ENCODE measurements at regions of chr4 and their contacts with region 1.

Region 1: GRCh38 chr4:154618708-154619315 is 6.4 kb upstream of the FGG start:
- ATAC-seq: peak in 4 of 8 experiments; percentile 61 to 76 (median 62)
- H3K4me3 ChIP-seq: no peak overlapping the region
- H3K27ac ChIP-seq: no peak overlapping the region
- H3K4me1 ChIP-seq: no peaks in the 10 kb centered on the region

Region 2: DNA sequence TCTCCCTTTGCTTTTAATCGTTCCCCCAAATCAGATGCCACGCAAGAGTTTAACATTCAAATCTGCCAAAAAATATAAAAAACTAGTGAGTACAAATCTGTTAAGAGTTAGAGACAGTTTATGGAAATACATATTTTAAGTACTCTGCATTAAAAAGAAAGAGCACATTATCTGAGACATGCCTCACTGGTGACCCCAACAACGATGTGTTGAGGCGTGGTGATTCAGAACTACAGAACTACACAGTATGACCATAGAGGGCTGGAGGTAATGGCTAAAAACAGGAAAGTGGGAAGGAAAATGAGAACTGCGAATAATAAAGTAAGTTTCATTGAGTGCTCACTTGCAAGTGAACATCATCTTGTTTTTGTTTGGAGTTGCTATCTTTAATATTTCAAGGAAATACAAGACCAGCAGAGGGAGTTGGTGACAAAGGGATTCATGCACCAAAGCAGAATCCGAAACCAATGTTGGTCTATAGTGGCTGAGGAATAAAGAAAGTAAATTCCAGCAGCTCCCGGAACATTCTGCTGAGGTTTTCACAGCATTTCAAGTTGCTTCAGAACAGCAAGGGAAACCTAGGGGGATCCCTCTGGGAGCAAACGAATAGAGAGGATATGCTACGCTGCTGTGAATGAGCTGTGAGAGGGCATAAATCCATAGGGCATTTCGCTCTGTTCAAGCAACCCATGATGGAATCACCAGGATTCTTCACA is 219.4 kb before region 1 on chr4:
- in situ Hi-C with region 1: loop called in 1 of 9 experiments (anchors 25 kb)
- ATAC-seq: peak in 5 of 8 experiments; percentile 36 to 91 (median 84)
- H3K4me3 ChIP-seq: no peak overlapping the region
- H3K27ac ChIP-seq: no peak overlapping the region
- H3K4me1 ChIP-seq: no peaks in the 10 kb centered on the region

Region 3: DNA sequence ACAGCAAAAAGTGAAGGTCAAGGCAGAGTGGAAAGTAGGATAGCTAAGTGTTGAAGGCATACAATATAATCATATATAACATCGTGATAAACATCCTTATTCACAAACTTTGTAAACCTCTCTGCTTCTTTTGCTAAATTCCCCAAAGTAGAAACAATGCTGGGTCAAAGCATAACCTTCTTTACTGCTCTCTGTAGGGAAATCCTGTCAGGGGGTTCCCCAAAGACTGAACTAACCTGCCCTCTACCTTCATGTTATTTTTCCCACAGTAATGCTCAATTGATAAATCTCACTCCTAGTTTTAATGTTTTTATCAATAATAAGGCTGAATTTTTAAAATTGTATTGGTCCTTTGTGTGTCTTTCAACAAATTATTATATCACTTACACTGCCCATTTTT is 182.9 kb before region 1 on chr4:
- in situ Hi-C with region 1: no loop called
- ATAC-seq: no peak
- H3K4me3 ChIP-seq: no peak overlapping the region
- H3K27ac ChIP-seq: no peak overlapping the region
- H3K4me1 ChIP-seq: peaks cover 0 to 2% of the 10 kb centered on the region in 2 donors

Region 4: DNA sequence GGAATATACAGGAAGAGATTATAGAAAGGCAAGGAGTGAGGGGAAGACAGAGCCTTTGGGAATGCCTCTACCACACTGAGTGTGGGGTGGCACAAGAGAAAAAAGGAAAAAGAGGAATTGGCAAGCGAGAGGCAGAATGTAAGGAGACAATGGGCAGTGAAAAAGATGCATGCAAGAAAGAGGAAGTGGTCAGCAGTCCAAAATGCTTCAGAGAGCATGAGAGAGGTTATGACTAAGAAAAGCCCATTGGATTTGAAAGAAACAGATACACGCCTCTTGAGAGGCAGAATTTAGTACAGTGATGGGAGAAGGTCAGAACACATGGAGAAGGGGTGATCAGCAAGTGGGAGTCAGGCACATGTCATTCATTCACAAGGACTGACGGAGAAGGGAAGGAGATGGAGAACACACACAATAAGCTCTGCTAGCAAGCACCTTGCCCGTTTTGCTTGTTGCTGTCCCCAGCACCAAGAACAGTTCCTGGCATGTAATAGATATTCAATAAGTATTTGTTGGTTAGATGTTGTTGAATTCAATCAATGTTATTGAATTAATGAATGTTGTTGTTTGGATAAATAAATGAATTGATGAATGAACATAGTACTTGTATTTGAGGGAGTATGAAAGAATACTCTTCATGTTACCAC is 133.6 kb before region 1 on chr4:
- in situ Hi-C with region 1: no loop called
- ATAC-seq: no peak
- H3K4me3 ChIP-seq: no peak overlapping the region
- H3K27ac ChIP-seq: no peak overlapping the region
- H3K4me1 ChIP-seq: peaks cover 14 to 15% of the 10 kb centered on the region in 2 donors

Region 5: DNA sequence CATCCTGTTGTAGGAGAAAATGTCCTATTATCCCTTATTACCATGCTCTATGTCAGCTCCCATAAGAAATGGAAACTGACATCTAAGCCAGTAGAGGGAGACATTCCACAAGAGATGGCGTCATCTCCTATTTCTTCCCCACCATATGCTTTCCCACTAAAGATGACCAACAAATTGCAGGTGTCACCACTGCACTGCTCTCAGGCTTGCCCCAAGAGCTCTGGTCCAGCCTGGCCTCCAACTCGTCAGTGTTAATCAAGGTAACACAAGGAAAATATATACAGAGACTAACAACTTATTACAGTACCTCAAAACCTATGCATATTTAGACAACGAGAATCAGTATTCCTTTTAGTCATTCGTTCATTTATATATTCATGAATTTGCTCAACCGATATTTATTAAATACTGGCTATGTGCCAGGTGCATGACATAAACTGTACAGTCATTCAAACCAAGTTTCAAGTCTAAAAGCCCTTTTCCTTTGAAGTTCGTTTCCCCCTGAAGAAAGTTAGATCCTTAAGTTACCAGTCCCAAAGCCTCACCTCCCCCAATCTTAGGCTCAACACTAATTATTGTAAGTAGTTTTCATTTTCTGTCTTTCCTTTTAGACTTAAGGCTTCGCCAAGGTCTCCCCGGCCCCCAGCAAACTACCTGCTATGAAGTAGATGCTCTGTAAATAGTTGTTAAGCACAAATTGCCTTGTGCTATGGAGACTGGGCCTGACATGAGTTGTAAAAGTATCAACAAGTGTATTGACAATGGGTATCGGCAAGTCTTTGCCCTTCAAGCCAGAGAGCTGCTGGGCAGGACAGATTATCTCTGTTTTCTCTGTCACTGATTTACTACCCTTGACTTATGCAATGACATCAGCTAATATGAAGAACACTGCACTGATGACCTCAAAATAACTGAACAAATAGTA is 59.1 kb before region 1 on chr4:
- in situ Hi-C with region 1: loop called in 2 of 9 experiments (anchors 5 to 10 kb)
- ATAC-seq: peak in 3 of 8 experiments; percentile 90 to 95 (median 94)
- H3K4me3 ChIP-seq: no peak overlapping the region
- H3K27ac ChIP-seq: no peak overlapping the region
- H3K4me1 ChIP-seq: no peaks in the 10 kb centered on the region

Region 6: DNA sequence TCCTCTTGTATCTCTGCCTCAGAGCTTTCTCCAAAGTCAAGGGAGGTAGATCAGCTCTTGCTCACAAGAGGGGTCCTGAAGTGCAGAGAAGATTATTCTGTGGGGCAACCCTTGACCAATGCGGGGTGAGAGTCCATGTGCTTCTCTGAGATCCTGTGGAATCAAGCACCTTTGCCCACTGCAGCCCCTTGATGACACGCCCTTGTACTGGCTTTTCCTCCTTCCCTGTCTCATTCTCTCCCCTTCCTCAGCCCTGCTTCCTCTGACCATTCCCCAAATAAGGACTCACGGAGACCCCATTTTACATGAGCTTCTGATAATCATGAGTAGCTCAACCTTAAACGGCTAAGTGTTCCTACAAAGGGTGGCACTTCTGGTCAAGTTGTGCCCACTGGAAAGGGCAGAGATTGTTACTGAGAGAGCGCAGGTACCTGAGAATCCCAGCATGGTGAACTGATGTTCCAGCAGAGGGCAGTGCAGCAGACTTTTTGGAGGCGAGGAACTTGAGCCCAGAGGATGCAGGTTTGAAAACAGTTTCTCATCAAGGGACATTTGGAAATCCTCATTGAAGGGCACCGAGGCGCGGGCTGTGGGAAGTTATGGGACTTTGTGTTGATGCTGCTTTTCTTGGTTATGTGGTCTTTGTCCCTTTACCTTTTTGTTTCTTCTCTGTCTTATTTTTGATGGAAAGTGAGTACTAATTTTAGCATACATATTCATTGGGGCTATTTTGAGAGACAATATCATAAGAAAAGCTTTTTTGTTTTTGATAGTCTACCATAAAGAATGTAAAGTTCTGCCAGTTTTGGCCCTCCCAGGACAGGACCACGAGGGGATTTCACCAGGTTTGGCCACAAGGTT is 363.6 kb after region 1 on chr4:
- in situ Hi-C with region 1: no loop called
- ATAC-seq: peak in 6 of 8 experiments; percentile 42 to 95 (median 70)
- H3K4me3 ChIP-seq: no peak overlapping the region
- H3K27ac ChIP-seq: no peak overlapping the region
- H3K4me1 ChIP-seq: no peaks in the 10 kb centered on the region

Measured in motor neuron (in vitro differentiated cells).